ENCODE measurements at regions of chr3 and their contacts with region 1.

Region 1: GRCh38 chr3:49276475-49277382 is at the start of gene C3orf62:
- DNase-seq: peak; percentile 96
- H3K4me3 ChIP-seq: peak within 1 kb of the TSS; percentile 41 to 57 (median 51)
- H3K27ac ChIP-seq: peak within 1 kb of the TSS; percentile 86 to 96 (median 94)
- H3K4me1 ChIP-seq: peaks cover 0 to 25% (median 19%) of the 10 kb centered on the region in 4 donors
- H3K27me3 ChIP-seq: no peaks in the 10 kb centered on the region
- CTCF ChIP-seq: no peak
- EP300 ChIP-seq: no peak
- POLR2A ChIP-seq: peak; percentile 48 to 52
- total RNA-seq, gene C3orf62: 2.5 to 19.4 (median 4.5) TPM

Region 2: DNA sequence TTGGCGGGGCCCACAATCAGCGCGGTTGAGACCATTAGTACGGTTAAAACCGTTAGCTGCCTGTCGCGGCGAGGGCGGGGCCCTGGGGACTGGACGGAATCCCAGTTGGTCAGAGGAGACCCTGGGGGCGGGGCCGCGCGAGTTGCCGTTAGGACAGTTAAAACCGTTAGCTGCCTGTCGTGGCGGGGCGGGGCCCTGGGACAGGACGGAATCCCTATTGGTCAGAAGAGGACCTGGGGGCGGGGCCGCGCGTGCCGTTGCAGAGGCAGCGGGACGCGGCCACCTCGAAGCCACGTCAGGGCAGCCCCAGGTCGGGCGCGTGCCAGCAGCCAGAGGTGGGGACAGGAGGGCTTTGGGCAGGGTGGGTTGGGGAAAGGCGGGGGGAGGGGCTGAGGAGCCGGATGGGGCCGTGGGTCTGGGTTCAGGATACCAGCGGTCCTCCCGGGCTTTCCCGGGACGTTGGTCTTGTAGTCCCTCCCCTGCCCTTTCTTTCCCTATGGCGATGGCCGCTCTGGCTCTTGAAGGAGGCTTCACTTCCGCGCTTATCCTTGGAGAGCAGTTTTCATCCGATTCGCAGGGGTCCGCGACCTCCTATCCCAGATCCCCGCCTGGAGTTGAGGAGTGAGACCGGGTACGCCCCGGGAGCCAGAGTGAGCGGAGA is 77.4 kb before region 1 on chr3:
- intact Hi-C with region 1: loop called (anchors 2 kb)
- DNase-seq: peak; percentile 98
- H3K4me3 ChIP-seq: peak overlapping the region; percentile 31 to 68 (median 42)
- H3K27ac ChIP-seq: peak overlapping the region; percentile 67 to 88 (median 71)
- H3K4me1 ChIP-seq: peaks cover 0 to 16% (median 10%) of the 10 kb centered on the region in 4 donors
- H3K27me3 ChIP-seq: no peaks in the 10 kb centered on the region
- CTCF ChIP-seq: no peak
- EP300 ChIP-seq: no peak
- POLR2A ChIP-seq: no peak

Region 3: GRCh38 chr3:49217688-49218470 is 58.9 kb before region 1 on chr3:
- intact Hi-C with region 1: loop called (anchors 5 kb)
- DNase-seq: peak; percentile 81
- H3K4me3 ChIP-seq: no peak overlapping the region
- H3K27ac ChIP-seq: peak overlapping the region; percentile 77 to 85 (median 84)
- H3K4me1 ChIP-seq: peaks cover 4 to 31% (median 24%) of the 10 kb centered on the region in 4 donors
- H3K27me3 ChIP-seq: no peaks in the 10 kb centered on the region
- CTCF ChIP-seq: no peak
- EP300 ChIP-seq: no peak
- POLR2A ChIP-seq: no peak

Measured in sigmoid colon (tissue), 7 donors.